ENCODE measurements at regions of chr9 and their contacts with region 1.

Region 1: GRCh38 chr9:3436629-3437420 is 89.0 kb downstream of the RFX3 start:
- DNase-seq: no peak
- H3K4me3 ChIP-seq: no peak overlapping the region
- H3K27ac ChIP-seq: no peak overlapping the region
- H3K27me3 ChIP-seq: no peaks in the 10 kb centered on the region
- CTCF ChIP-seq: no peak

Region 2: DNA sequence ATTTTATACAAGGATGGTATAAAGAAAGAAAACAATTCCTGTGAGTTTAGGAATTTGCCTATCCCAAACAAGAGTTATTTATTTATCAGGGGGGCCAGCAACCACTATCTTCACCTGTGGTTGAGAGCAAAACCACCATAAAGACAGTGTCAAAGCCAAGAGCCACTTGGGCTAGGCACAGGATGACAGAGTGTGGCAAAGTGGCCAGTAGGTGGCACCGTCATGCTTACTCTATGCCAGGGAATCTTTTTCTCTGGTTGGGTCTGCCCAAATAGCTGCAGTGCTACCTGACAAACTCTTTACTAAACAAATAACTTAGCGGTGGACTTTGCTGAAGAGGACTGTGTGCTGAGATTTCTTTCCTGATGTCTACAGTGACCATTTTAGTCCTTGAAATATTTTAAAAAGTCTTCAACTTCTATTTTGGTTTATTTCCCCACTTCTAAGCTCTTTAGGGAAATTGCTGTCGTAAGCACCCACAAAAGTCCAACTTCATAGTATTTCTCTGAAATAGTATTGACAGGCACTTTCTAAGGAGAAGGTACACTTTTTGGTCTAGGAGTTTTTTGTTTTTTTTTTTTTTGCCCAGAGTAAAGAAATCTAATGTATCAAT is 196.1 kb before region 1 on chr9:
- intact Hi-C with region 1: loop called in 1 of 2 experiments (anchors 10 kb)
- DNase-seq: peak; percentile 46 to 86 (median 71)
- H3K4me3 ChIP-seq: peak overlapping the region in 3 of 59 donors; percentile 2 to 10 (median 6)
- H3K27ac ChIP-seq: no peak overlapping the region
- H3K27me3 ChIP-seq: no peaks in the 10 kb centered on the region
- CTCF ChIP-seq: peak; percentile 44 to 88 (median 79)

Region 3: GRCh38 chr9:3331817-3332216 is 105.0 kb before region 1 on chr9:
- intact Hi-C with region 1: loop called in 1 of 2 experiments (anchors 10 kb)
- DNase-seq: no peak
- H3K4me3 ChIP-seq: no peak overlapping the region
- H3K27ac ChIP-seq: no peak overlapping the region
- H3K27me3 ChIP-seq: no peaks in the 10 kb centered on the region
- CTCF ChIP-seq: peak in 44 of 56 donors; percentile 13 to 58 (median 36)